Sigmoid colon (tissue), 7 donors: ENCODE measurements at regions of chrX and their contacts with region 1.

Region 1: GRCh38 chrX:31658360-31658759 is 586.5 kb upstream of the FTHL17 start:
- DNase-seq: no peak
- H3K4me3 ChIP-seq: no peak overlapping the region
- H3K27ac ChIP-seq: no peak overlapping the region
- H3K4me1 ChIP-seq: no peaks in the 10 kb centered on the region
- H3K27me3 ChIP-seq: no peaks in the 10 kb centered on the region
- CTCF ChIP-seq: peak in 3 of 4 experiments; percentile 19 to 35 (median 28)
- EP300 ChIP-seq: no peak
- POLR2A ChIP-seq: no peak

Region 2: DNA sequence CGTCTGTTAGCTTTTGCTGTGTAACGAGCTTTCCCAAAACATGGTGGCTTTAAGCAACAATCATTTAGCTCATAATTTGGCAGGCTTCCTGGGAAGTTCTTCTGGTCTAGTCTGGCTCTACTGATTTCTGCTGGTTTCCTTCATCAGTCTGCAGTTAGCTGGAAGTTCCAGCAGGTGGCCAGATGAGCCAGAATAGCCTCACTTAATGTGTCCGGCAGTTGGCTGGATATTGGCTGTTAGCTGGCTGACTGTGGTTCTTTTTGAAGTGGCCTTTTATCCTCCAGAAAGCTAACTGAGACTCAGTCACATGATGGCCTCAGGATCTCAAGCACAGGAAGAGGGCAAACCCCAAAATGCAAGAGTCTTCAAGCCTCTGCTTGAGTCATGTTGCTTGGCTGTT is 621.5 kb before region 1 on chrX:
- intact Hi-C with region 1: loop called (anchors 5 kb)
- DNase-seq: no peak
- H3K4me3 ChIP-seq: no peak overlapping the region
- H3K27ac ChIP-seq: no peak overlapping the region
- H3K4me1 ChIP-seq: no peaks in the 10 kb centered on the region
- H3K27me3 ChIP-seq: no peaks in the 10 kb centered on the region
- CTCF ChIP-seq: peak; percentile 10 to 54 (median 42)
- EP300 ChIP-seq: no peak
- POLR2A ChIP-seq: no peak

Region 3: GRCh38 chrX:31213941-31214340 is 444.4 kb before region 1 on chrX:
- intact Hi-C with region 1: loop called (anchors 10 kb)
- DNase-seq: no peak
- H3K4me3 ChIP-seq: no peak overlapping the region
- H3K27ac ChIP-seq: no peak overlapping the region
- H3K4me1 ChIP-seq: peaks cover 0 to 20% (median 0%) of the 10 kb centered on the region in 4 donors
- H3K27me3 ChIP-seq: no peaks in the 10 kb centered on the region
- CTCF ChIP-seq: peak in 2 of 4 experiments; percentile 26 to 36
- EP300 ChIP-seq: no peak
- POLR2A ChIP-seq: no peak